ENCODE measurements at regions of chr22 and their contacts with region 1.

Region 1: GRCh38 chr22:41666661-41667258 is 21.9 kb downstream of the SNU13 start:
- DNase-seq: peak; percentile 96
- ATAC-seq: peak; percentile 94
- H3K4me3 Mint-ChIP-seq: peak overlapping the region; percentile 76
- H3K27ac Mint-ChIP-seq: peak overlapping the region; percentile 95
- H3K4me1 Mint-ChIP-seq: peaks cover 13% of the 10 kb centered on the region
- H3K27me3 Mint-ChIP-seq: no peaks in the 10 kb centered on the region

Region 2: DNA sequence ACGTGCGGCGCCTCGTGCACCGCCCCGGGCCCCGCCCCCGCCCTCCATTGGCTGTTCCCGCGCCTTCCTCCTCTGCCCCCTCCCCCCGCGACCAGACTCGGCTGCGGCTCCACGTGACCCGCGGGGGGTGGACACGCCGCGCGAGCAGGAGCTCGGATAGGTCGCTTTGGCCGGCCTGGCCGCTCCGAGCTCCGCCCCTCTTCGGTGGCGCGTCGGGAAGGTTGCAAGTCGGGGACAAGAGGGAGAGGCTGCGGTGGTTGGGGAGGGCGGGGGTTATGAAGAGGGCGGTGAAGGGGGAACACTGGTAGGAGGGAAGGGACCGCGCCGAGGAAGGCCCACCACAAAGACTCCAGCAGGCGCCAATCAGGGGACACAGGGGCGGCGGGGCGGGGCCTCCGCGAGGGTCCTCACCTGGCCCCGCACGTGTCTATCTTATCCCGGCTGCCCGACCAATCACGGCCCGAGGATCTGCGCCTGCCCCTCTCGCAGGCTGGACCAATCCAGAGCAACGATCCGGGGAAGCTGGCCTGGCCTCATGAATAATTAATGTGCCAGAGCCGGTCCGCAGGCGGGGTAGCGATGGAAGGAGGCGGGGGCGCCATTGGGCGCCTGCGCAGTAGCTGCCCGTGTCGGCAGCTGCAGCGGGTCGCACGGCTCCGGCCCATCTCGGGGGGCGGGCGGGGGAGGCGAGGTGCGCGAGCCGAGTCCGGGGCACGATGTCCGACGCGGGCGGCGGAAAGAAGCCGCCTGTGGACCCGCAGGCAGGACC is 285.2 kb before region 1 on chr22 and contains the start of gene TEF:
- CTCF ChIA-PET with region 1: no interaction called
- POLR2A ChIA-PET with region 1: no interaction called
- intact Hi-C with region 1: no loop called
- DNase-seq: peak; percentile 98
- ATAC-seq: peak; percentile 94
- H3K4me3 Mint-ChIP-seq: peak within 1 kb of the TSS; percentile 79
- H3K27ac Mint-ChIP-seq: peak within 1 kb of the TSS; percentile 91
- H3K4me1 Mint-ChIP-seq: peaks cover 10% of the 10 kb centered on the region
- H3K27me3 Mint-ChIP-seq: no peaks in the 10 kb centered on the region
- total RNA-seq, gene TEF: 1.7 to 2.2 TPM

Region 3: GRCh38 chr22:41682033-41682807 is 15.5 kb after region 1 on chr22:
- CTCF ChIA-PET with region 1: interaction called, 15 read pairs
- POLR2A ChIA-PET with region 1: no interaction called
- intact Hi-C with region 1: no loop called
- DNase-seq: peak; percentile 89
- ATAC-seq: peak; percentile 89
- H3K4me3 Mint-ChIP-seq: peak overlapping the region; percentile 99
- H3K27ac Mint-ChIP-seq: peak overlapping the region; percentile 97
- H3K4me1 Mint-ChIP-seq: peaks cover 32% of the 10 kb centered on the region
- H3K27me3 Mint-ChIP-seq: no peaks in the 10 kb centered on the region

Region 4: DNA sequence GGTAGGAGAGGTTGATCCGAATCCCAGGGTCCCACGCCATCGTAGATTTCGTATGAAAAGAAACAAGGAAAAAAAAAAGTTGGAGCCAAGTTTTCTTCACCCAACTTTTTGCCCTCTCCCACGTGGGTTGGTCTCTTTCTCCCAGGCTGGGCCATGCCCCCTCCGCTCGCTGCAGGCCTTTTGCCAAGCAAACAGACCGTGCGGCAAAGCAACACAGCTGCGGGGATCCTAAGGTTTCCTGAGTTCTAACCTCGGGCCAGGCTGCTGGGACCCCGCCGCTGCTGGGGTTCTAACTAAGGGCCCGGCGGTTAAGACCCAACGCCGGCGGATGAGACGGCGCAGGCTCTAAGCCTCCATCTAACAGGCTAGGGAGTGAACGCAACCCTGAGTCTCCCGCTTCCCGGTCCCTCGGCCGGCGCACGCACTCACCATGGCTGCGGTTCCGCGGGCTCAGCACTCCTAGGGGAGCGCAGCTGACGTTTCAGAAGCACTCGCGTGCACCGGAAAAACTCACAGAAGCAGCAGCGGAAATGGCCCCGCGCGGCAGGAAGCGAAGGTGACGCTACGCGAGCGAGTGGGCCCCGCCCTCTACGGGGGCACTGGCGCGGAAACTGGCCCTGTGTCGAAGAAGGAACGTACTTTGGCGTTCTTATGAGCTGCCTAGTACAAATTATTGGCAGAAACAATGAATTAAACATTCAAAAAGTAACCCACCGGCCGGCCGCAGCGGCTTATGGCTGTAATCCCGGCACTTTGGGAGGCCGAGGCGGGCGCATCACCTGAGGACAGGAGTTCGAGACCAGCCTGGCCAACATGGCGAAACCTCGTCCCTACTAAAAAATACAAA is 21.8 kb after region 1 on chr22 and contains the start of gene SNU13:
- CTCF ChIA-PET with region 1: interaction called, 15 read pairs
- POLR2A ChIA-PET with region 1: interaction called, 5 read pairs
- intact Hi-C with region 1: loop called (anchors 1 to 2 kb)
- DNase-seq: peak; percentile 96
- ATAC-seq: peak; percentile 93
- H3K4me3 Mint-ChIP-seq: peak within 1 kb of the TSS; percentile 98
- H3K27ac Mint-ChIP-seq: peak within 1 kb of the TSS; percentile 98
- H3K4me1 Mint-ChIP-seq: peaks cover 34% of the 10 kb centered on the region
- H3K27me3 Mint-ChIP-seq: no peaks in the 10 kb centered on the region
- total RNA-seq, gene SNU13: 275 to 281 TPM

Measured in activated CD4-positive, alpha-beta T cell treated with anti-CD3 and anti-CD28 coated beads for 36 hours (primary cell).